Activated CD4-positive, alpha-beta memory T cell treated with anti-CD3 and anti-CD28 coated beads, Interleukin-2, amount 10 ng/mL, durations not matched to agents 7 days and 5 days (primary cell): ENCODE measurements at regions of chr11 and their contacts with region 1.

Region 1: DNA sequence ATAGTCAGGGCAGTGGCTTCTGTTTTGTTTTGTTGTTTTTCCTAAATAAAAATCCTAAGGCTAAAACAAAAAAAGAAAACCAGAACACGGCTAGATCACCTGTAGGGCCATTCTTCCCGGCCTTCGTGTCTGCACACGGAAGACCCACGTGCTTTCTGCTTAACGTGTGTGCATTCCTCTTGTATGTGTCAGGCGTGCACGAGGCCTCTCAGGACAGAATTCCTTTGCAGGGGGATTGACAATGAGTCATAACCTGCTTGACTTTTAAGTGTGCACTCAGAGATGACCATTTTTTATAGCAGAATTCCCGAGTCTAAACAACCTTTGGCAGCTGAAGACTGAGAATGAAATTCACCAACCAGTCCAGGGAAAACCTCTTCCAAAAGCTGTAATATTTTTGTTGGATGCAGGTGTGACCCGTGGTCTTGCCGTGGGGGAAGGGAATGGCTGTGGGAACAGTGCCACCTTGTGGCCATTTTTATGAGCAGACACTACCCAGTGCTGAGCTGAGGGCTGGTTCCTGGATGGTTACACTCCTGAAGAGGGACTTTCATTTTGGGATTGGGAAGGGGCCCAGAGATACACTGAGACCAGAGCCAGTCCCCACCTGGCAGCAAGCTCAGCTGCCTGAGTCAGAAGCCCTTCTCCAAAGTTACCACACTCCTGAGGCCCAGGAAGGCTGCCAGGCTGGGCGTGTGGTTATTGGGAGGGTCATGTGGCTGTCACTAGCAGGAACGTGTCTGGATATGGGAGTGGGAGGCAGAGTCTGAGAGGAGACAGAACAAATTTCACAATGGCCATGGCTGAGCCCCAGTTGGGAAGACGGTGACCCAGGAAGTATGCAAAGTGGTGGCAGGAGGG is 35.8 kb upstream of the DKK3 start:
- DNase-seq: peak; percentile 72
- H3K4me3 Mint-ChIP-seq: no peak overlapping the region
- H3K27ac Mint-ChIP-seq: no peak overlapping the region
- H3K4me1 Mint-ChIP-seq: peaks cover 9% of the 10 kb centered on the region
- H3K27me3 Mint-ChIP-seq: peaks cover 4% of the 10 kb centered on the region

Region 2: GRCh38 chr11:11798586-11799438 is 245.4 kb before region 1 on chr11:
- CTCF ChIA-PET with region 1: interaction called, 25 read pairs
- POLR2A ChIA-PET with region 1: no interaction called
- DNase-seq: peak; percentile 81
- H3K4me3 Mint-ChIP-seq: no peak overlapping the region
- H3K27ac Mint-ChIP-seq: no peak overlapping the region
- H3K4me1 Mint-ChIP-seq: no peaks in the 10 kb centered on the region
- H3K27me3 Mint-ChIP-seq: peaks cover 35% of the 10 kb centered on the region

Region 3: DNA sequence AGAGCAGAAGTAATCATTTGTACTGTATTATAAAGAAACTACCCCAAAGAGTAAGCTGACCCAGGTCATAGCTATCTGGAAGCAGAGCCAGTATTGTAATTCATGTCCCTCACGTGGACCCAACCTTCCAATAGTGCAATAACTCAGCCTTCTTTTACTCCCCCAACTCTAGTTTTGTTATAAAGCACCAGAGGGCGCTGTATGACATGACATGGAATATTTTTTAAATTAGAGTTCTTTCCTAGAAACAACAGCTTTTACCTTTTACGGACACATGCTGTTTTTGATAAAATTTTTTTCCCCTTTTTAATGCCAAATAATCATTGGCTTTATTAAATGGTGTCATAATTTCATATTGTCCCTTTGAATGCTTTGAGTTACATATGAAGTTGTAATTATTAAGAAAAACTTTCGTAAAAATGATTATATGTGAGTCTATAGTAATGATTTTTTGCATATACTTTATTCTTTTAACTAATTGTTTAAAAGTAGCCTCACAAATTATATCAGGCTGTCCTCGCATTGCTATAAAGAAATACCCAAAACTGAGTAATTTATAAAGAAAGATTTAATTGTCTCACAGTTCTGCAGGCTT is 112.6 kb before region 1 on chr11:
- CTCF ChIA-PET with region 1: interaction called, 46 read pairs
- POLR2A ChIA-PET with region 1: no interaction called
- DNase-seq: no peak
- H3K4me3 Mint-ChIP-seq: no peak overlapping the region
- H3K27ac Mint-ChIP-seq: no peak overlapping the region
- H3K4me1 Mint-ChIP-seq: peaks cover 6% of the 10 kb centered on the region
- H3K27me3 Mint-ChIP-seq: no peaks in the 10 kb centered on the region

Region 4: GRCh38 chr11:12017243-12017678 is 26.9 kb before region 1 on chr11:
- CTCF ChIA-PET with region 1: no interaction called
- POLR2A ChIA-PET with region 1: no interaction called
- DNase-seq: no peak
- H3K4me3 Mint-ChIP-seq: no peak overlapping the region
- H3K27ac Mint-ChIP-seq: no peak overlapping the region
- H3K4me1 Mint-ChIP-seq: no peaks in the 10 kb centered on the region
- H3K27me3 Mint-ChIP-seq: peaks cover 55% of the 10 kb centered on the region